Right ventricle myocardium inferior (tissue), 1 donor: ENCODE measurements at regions of chr4 and their contacts with region 1.

Region 1: DNA sequence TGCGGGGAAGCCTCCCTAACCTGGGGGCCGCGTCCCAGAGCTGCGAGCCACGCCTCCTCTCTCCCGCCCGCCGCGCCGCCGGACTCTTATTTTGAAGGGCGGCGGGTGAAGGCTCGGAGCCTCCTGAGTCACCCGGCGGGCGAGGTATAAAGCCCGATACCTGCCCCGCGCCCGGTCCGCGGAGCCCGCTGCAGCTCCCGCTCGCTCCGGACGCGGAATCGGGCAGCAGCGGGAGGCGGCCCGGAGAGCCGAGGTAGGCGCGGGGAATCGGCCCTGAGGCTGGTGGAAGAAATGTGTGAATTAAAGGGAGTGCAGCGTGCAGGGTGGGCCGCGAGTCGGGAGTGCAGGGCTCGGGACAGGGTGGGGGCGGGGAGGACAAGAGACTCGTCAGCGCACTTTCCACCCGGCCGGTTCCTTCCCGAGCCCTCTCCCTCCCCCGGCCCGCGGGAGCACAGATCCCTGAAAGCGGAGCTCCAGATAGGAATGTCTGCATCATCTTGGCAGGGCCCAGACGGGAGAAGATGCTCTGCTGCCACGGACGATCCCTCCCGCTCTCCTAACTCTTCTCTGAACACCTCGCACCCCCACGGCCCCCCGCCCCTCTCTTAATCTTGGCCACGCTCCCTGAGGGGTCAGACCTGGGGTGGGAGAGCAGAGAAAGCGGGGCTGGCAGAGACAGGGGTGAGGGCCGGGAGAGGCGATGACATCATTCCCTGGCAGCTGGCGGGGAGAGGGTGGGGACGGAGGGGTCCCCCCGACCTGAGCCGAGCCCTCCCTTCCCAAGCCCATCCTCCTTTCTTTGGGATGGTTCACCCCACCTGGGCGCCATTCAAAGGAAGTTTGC is 177.9 kb downstream of the CBR4 start:
- DNase-seq: peak; percentile 91
- ATAC-seq: peak; percentile 92

Region 2: GRCh38 chr4:168717847-168718246 is 114.3 kb before region 1 on chr4:
- intact Hi-C with region 1: loop called (anchors 5 kb)
- DNase-seq: no peak
- ATAC-seq: peak; percentile 90

Region 3: GRCh38 chr4:168815379-168816345 is 16.5 kb before region 1 on chr4:
- intact Hi-C with region 1: loop called (anchors 2 kb)
- DNase-seq: no peak
- ATAC-seq: no peak

Region 4: DNA sequence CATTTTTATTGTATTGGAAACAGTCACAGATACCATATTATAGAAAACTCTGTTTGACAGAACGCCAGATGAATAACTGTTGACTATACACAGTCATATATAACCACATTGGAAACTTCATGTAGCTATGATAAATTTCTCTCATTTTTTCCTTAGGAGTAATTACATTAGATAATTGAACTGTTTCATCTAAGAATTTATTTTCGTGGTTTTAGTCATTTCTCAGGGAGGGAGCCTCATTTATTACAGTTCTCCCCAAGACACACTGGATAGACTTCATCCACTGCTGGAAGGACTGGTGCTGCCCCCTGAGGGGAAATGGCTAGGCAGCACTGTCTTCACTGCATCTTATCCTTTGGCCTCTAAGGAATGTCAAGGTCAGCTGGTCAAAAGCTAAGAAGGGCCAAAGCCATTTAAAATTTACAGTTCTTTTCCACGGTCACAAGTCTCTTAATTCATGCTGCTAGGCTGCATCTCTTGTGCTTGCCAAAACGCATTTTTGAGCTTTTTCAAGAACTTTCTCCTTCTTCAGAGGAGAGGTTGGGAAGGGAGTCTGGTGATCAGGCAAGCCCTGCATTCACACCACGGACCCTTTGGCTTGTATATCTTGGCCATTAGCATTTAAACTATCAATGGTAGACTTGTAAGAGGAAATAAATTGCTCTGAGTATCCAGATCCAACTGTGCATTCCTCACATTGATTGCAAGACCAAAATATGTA is 32.8 kb after region 1 on chr4:
- intact Hi-C with region 1: no loop called
- DNase-seq: no peak
- ATAC-seq: peak; percentile 33

Region 5: GRCh38 chr4:168877511-168878491 is 45.7 kb after region 1 on chr4:
- intact Hi-C with region 1: loop called (anchors 5 kb)
- DNase-seq: peak; percentile 83
- ATAC-seq: peak; percentile 82

Region 6: DNA sequence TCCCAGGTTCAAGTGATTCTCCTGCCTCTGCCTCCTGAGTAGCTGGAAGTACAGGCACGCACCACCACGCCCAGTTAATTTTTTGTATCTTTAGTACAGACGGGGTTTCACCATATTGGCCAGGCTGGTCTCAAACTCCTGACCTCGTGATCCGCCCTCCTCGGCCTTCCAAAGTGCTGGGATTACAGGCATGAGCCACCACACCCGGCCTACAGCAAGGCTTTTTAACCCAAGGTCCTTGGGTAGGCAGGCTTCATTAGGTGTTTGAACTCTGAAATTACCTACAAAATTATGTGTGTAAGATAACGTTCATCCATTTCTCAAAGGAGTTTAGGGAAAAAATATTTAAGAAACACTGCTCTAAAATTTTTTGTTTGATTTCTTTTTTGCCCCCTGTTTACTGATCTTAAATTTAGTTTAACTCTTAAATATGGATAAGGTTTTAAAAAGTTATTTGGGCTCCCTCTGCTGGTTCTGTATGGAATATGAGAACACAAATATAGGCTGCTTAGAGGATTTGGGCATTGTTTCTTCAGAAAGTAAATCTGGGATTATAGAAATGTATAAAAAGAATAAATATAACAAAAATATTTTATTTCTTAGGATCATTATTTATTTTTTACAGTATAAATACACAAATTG is 85.1 kb after region 1 on chr4:
- intact Hi-C with region 1: loop called (anchors 5 kb)
- DNase-seq: no peak
- ATAC-seq: no peak